Left cardiac atrium (tissue), 4 donors: ENCODE measurements at regions of chr6 and their contacts with region 1.

Region 1: DNA sequence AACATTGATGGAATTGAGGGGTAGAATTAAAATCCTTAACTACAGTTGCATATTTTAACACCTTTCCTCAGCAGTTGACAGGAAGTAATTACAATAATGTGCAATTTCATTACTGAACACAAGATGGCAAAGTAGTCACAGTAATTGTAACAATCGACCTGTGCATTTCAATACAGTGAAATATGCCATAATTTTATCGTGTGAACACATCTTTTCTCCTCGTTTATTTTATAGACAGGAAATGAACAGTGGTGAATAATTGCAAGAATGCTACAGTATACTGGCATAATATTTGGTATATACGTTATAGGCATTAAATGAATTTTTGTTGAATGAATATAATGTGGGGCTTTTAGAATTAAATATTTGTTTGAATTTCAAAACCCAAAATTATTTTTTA is 25.0 kb downstream of the CYB5R4 start:
- DNase-seq: no peak
- ATAC-seq: peak; percentile 31 to 59

Region 2: GRCh38 chr6:83815631-83816272 is 68.8 kb before region 1 on chr6:
- intact Hi-C with region 1: no loop called
- DNase-seq: no peak
- ATAC-seq: no peak

Region 3: DNA sequence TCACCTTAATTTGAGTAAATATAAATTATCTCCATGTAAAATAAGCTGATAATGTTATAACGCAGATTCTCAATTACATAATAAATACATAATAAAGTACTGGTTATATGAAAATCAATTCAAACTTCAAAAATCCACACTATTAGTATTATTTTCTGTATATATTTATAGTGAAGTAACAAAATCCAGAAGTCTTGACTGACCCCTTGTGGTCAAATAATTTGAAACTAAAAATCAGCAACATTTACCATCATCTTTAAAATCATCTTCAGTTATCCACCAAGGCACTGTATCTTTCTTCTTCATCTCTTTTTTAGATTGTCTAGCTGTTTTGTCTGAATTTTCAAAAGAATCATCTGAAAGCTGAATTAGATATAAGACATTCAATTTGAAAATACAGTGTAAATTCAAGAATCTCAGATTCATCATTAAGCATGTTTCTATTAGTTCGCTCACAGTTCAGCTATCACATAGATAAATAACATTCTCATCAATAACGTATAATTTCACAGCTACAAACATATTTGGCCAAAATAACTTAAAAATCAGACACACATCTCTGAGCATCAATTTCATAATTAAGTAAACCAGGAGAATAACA is 336.4 kb after region 1 on chr6:
- intact Hi-C with region 1: loop called (anchors 2 to 5 kb)
- DNase-seq: no peak
- ATAC-seq: no peak

Region 4: GRCh38 chr6:84227434-84228197 is 343.1 kb after region 1 on chr6 and contains the start of gene CEP162:
- intact Hi-C with region 1: loop called (anchors 2 to 5 kb)
- DNase-seq: peak; percentile 96
- ATAC-seq: peak; percentile 96 to 99
- total RNA-seq, gene CEP162: 5.2 to 5.5 TPM